T-cell (primary cell): ENCODE measurements at regions of chr3 and their contacts with region 1.

Region 1: DNA sequence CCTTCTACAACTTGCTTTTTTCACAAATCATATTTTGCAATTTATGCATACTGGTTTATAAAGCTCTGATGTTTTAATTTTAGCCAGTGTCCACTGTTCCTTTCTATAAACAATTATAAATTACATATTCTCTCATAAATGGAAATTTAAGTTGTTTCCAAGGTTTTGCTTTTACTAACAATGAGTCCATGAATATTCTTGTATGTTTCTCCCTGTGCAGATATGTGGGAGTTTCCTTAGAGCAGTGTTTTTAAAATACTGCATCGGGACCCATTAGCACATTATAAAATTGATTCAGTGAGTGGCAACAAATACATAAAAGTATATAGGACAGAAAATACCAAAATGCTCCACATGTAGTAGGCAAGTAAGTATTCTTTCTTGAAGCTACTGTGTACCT is 235.6 kb downstream of the PCCB start:
- DNase-seq: no peak
- ATAC-seq: no peak
- H3K4me3 ChIP-seq: no peak overlapping the region
- H3K4me3 Mint-ChIP-seq: no peak overlapping the region
- H3K27ac ChIP-seq: no peak overlapping the region
- H3K27ac Mint-ChIP-seq: no peak overlapping the region
- H3K4me1 ChIP-seq: no peaks in the 10 kb centered on the region
- H3K4me1 Mint-ChIP-seq: no peaks in the 10 kb centered on the region
- H3K27me3 ChIP-seq: no peaks in the 10 kb centered on the region
- H3K27me3 Mint-ChIP-seq: no peaks in the 10 kb centered on the region

Region 2: DNA sequence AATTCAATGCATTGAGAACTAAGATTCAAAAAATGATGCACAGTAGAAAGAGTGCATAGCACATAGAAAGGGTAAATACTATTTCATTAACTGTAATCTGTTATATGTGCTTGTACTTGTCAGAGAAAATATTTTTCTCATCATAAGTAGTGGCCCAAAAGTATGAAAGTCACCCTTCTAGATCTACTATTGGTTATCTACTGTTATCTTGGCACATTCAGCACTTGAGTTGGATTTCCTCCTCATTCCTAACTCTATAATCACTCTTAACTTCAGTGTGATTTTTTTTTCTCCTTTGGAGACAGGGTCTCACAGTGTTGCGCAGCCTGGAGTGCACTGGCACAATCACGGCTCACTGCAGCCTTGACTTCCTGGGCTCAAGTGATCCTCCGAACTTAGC is 41.2 kb before region 1 on chr3:
- CTCF ChIA-PET with region 1: no interaction called
- POLR2A ChIA-PET with region 1: interaction called in 1 of 2 experiments, 10 read pairs
- DNase-seq: no peak
- ATAC-seq: no peak
- H3K4me3 ChIP-seq: no peak overlapping the region
- H3K4me3 Mint-ChIP-seq: no peak overlapping the region
- H3K27ac ChIP-seq: no peak overlapping the region
- H3K27ac Mint-ChIP-seq: no peak overlapping the region
- H3K4me1 ChIP-seq: no peaks in the 10 kb centered on the region
- H3K4me1 Mint-ChIP-seq: no peaks in the 10 kb centered on the region
- H3K27me3 ChIP-seq: no peaks in the 10 kb centered on the region
- H3K27me3 Mint-ChIP-seq: no peaks in the 10 kb centered on the region

Region 3: GRCh38 chr3:136512381-136512780 is 26.6 kb after region 1 on chr3:
- CTCF ChIA-PET with region 1: no interaction called
- POLR2A ChIA-PET with region 1: no interaction called
- DNase-seq: no peak
- ATAC-seq: no peak
- H3K4me3 ChIP-seq: no peak overlapping the region
- H3K4me3 Mint-ChIP-seq: no peak overlapping the region
- H3K27ac ChIP-seq: no peak overlapping the region
- H3K27ac Mint-ChIP-seq: no peak overlapping the region
- H3K4me1 ChIP-seq: no peaks in the 10 kb centered on the region
- H3K4me1 Mint-ChIP-seq: peaks cover 0 to 4% (median 0%) of the 10 kb centered on the region in 3 donors
- H3K27me3 ChIP-seq: no peaks in the 10 kb centered on the region
- H3K27me3 Mint-ChIP-seq: no peaks in the 10 kb centered on the region